ENCODE measurements at regions of chr4 and their contacts with region 1.

Region 1: GRCh38 chr4:26081795-26082498 is 167.9 kb downstream of the SMIM20 start:
- DNase-seq: no peak
- H3K4me3 ChIP-seq: no peak overlapping the region
- H3K27ac ChIP-seq: no peak overlapping the region
- H3K27me3 ChIP-seq: no peaks in the 10 kb centered on the region
- CTCF ChIP-seq: peak; percentile 67

Region 2: GRCh38 chr4:26020083-26020668 is 61.8 kb before region 1 on chr4:
- CTCF ChIA-PET with region 1: no interaction called
- POLR2A ChIA-PET with region 1: no interaction called
- DNase-seq: peak; percentile 43
- H3K4me3 ChIP-seq: no peak overlapping the region
- H3K27ac ChIP-seq: peak overlapping the region; percentile 57
- H3K27me3 ChIP-seq: no peaks in the 10 kb centered on the region
- CTCF ChIP-seq: no peak

Region 3: GRCh38 chr4:26093551-26093950 is 11.6 kb after region 1 on chr4:
- CTCF ChIA-PET with region 1: interaction called, 21 read pairs
- POLR2A ChIA-PET with region 1: interaction called, 6 read pairs
- DNase-seq: no peak
- H3K4me3 ChIP-seq: no peak overlapping the region
- H3K27ac ChIP-seq: no peak overlapping the region
- H3K27me3 ChIP-seq: no peaks in the 10 kb centered on the region
- CTCF ChIP-seq: no peak

Region 4: GRCh38 chr4:26171941-26172340 is 90.0 kb after region 1 on chr4:
- CTCF ChIA-PET with region 1: interaction called, 3 read pairs
- POLR2A ChIA-PET with region 1: interaction called, 13 read pairs
- DNase-seq: peak; percentile 99
- H3K4me3 ChIP-seq: no peak overlapping the region; the same call in 1 of the 2 replicates
- H3K27ac ChIP-seq: peak overlapping the region; percentile 96
- H3K27me3 ChIP-seq: no peaks in the 10 kb centered on the region
- CTCF ChIP-seq: no peak

Measured in AG04450 (cell line).